MCF 10A (cell line): ENCODE measurements at regions of chr17 and their contacts with region 1.

Region 1: DNA sequence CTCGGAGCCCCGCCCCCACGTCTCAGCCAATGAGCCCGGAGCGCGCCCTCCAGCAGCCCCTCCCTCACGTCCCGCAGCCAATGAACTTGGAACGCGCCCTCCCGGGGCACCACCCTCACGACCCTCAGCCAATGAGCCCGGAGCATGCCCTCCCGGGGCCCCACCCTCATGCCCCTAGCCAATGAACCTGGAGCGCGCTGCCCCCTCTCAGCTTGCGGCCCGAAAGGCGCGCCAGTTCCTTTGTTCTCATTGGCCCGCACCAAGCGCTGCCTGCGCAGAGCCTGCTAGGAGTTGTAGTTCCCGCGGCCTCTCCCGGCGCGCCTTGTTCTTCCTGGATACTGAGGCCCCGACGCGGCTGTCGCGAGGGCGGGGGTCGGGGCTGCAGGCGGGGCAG is at the start of gene LRRC45:
- DNase-seq: peak; percentile 99
- H3K4me3 Mint-ChIP-seq: peak within 1 kb of the TSS; percentile 79
- H3K27ac Mint-ChIP-seq: peak within 1 kb of the TSS; percentile 61
- H3K4me1 Mint-ChIP-seq: peaks cover 16% of the 10 kb centered on the region
- H3K27me3 Mint-ChIP-seq: no peaks in the 10 kb centered on the region
- CTCF ChIP-seq: no peak
- total RNA-seq, gene LRRC45: 2.6 and 3.4 TPM in 2 replicates

Region 2: GRCh38 chr17:81927653-81928543 is 95.1 kb before region 1 on chr17 and contains the start of gene MAFG:
- CTCF ChIA-PET with region 1: interaction called, 5 read pairs
- POLR2A ChIA-PET with region 1: interaction called, 12 read pairs
- intact Hi-C with region 1: no loop called
- DNase-seq: peak; percentile 93
- H3K4me3 Mint-ChIP-seq: peak within 1 kb of the TSS; percentile 84
- H3K27ac Mint-ChIP-seq: peak within 1 kb of the TSS; percentile 81
- H3K4me1 Mint-ChIP-seq: peaks cover 19% of the 10 kb centered on the region
- H3K27me3 Mint-ChIP-seq: no peaks in the 10 kb centered on the region
- CTCF ChIP-seq: peak; percentile 26
- total RNA-seq, gene MAFG: 38.1 and 48.9 TPM in 2 replicates

Region 3: DNA sequence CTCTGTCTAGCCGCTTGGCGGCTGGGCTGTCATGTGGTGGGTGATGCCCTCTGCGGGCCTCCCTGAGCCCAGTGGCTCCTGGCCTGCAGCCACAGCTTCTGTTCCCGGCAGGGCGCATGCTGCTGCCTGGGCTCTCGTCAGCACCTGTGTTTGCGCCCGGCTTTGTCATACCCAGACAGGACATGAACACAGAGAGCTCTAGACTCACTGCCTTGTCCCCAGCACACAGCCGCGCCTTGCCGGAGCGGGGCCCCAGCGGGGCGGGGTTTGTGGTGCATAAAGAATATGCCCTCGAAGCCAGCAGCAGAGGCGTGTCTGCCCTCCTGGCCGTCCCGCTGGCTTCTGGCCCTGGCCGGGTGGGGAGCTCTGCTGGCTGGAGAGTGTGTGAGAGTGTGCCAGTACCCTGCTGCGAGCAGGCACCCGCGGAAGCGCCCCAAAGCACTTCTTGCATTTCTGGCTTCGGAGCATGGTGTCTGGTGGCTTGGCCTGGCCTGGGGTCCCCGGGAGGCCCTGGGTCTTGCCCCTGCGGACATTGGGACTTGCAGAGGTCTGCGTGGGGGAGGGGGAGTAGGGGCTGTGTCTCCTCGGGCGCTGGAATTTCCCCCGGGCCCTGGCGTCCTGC is 31.2 kb before region 1 on chr17:
- CTCF ChIA-PET with region 1: interaction called, 3 read pairs
- POLR2A ChIA-PET with region 1: interaction called, 20 read pairs
- intact Hi-C with region 1: loop called (anchors 1 kb)
- DNase-seq: peak; percentile 92
- H3K4me3 Mint-ChIP-seq: peak overlapping the region; percentile 56
- H3K27ac Mint-ChIP-seq: peak overlapping the region; percentile 31
- H3K4me1 Mint-ChIP-seq: peaks cover 13% of the 10 kb centered on the region
- H3K27me3 Mint-ChIP-seq: no peaks in the 10 kb centered on the region
- CTCF ChIP-seq: no peak

Region 4: DNA sequence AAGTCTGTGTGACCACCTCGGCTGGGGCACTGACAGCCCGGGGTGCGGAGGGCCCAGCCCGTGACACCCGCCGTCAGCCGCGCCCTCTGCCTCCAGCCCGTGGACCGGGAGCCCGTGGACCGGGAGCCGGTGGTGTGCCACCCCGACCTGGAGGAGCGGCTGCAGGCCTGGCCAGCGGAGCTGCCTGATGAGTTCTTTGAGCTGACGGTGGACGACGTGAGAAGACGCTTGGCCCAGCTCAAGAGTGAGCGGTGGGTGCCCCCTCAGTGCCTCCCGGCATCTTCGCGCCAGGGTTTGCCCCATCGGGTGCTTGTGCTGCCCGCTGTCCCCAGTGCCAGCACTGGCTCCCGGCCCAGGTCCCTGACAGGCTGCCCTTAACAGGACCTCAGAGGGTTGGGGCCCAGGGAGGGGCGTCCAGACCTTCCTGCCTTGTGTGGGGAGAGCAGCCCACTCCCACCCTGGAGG is 14.0 kb before region 1 on chr17:
- CTCF ChIA-PET with region 1: interaction called, 12 read pairs
- POLR2A ChIA-PET with region 1: interaction called, 21 read pairs
- intact Hi-C with region 1: no loop called
- DNase-seq: no peak
- H3K4me3 Mint-ChIP-seq: no peak overlapping the region
- H3K27ac Mint-ChIP-seq: no peak overlapping the region
- H3K4me1 Mint-ChIP-seq: peaks cover 10% of the 10 kb centered on the region
- H3K27me3 Mint-ChIP-seq: no peaks in the 10 kb centered on the region
- CTCF ChIP-seq: no peak

Region 5: GRCh38 chr17:82267575-82268379 is 244.8 kb after region 1 on chr17:
- CTCF ChIA-PET with region 1: no interaction called
- POLR2A ChIA-PET with region 1: no interaction called
- intact Hi-C with region 1: no loop called
- DNase-seq: peak; percentile 92
- H3K4me3 Mint-ChIP-seq: peak overlapping the region; percentile 64
- H3K27ac Mint-ChIP-seq: peak overlapping the region; percentile 42
- H3K4me1 Mint-ChIP-seq: peaks cover 39% of the 10 kb centered on the region
- H3K27me3 Mint-ChIP-seq: no peaks in the 10 kb centered on the region
- CTCF ChIP-seq: no peak